AG04450 (cell line): ENCODE measurements at regions of chr3 and their contacts with region 1.

Region 1: DNA sequence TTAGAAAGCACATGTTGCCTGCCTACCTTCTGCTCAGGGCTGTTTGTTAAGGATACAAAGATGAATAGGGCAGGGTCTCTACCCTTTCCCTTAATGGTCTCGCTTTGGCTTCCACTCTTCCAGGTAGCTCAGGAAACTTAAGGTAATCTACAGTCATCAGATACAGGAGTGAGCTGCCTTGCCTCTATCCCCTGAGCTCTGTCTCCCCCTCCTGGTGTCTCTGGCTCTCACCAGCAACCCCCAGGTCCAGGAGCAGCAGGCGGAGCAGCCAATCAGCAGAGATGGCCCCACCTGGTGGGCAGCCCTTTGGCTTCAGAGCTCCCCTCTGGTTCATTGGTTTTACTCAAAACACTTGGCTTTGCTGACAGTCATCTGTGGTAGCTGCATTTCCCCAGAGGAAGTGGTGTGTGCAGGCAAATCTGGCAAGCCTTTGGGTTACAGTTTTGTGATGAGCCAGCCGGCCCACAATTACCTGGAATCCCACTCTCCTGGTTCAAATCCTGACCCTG is 8.5 kb upstream of the CX3CR1 start:
- DNase-seq: peak; percentile 46
- H3K4me3 ChIP-seq: no peak overlapping the region
- H3K27ac ChIP-seq: no peak overlapping the region
- H3K27me3 ChIP-seq: no peaks in the 10 kb centered on the region
- CTCF ChIP-seq: peak; percentile 96

Region 2: GRCh38 chr3:39101022-39101689 is 187.2 kb before region 1 on chr3:
- CTCF ChIA-PET with region 1: interaction called, 16 read pairs
- POLR2A ChIA-PET with region 1: no interaction called
- DNase-seq: no peak
- H3K4me3 ChIP-seq: no peak overlapping the region
- H3K27ac ChIP-seq: no peak overlapping the region
- H3K27me3 ChIP-seq: no peaks in the 10 kb centered on the region
- CTCF ChIP-seq: peak; percentile 71

Region 3: DNA sequence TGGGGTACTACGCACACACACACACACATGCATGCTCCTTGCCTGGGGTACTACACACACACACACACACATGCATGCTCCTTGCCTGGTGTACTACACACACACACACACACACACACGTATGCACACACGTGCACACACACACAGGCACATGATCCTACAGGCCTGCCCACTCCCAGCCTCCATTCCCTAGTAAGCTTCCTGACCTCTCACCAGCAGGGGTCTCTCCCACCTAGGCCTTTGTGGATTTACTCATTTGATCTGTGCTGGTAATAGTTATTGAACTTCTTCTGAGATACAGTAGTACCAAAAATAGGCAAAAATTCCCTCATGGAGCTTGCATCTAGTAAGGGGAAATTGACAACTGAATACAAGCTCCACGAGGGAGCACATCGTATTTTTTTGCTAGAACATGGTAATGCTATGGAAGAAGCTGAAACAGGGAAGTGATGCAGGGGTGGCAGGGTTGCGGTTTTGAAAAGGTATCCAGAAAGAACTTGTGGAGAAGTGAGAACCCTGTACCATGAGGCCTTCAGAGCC is 161.8 kb before region 1 on chr3:
- CTCF ChIA-PET with region 1: interaction called, 446 read pairs
- POLR2A ChIA-PET with region 1: interaction called, 4 read pairs
- DNase-seq: no peak
- H3K4me3 ChIP-seq: no peak overlapping the region
- H3K27ac ChIP-seq: no peak overlapping the region
- H3K27me3 ChIP-seq: no peaks in the 10 kb centered on the region
- CTCF ChIP-seq: peak; percentile 80

Region 4: DNA sequence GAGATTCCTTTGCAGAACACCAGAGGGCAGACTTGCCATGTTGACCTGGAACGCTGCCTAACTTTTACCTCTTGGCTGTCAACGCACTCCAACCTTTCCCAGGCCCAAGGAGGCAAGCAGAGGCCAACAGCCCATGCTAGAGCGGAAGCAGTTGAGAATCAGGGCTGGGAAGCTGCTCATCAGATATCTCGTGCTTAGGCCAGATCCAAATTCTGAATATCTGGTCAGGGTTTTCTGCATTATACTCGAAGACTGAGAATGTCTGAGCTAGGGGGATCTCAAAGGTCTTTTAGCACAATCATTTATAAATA is 98.4 kb before region 1 on chr3:
- CTCF ChIA-PET with region 1: interaction called, 269 read pairs
- POLR2A ChIA-PET with region 1: no interaction called
- DNase-seq: no peak
- H3K4me3 ChIP-seq: no peak overlapping the region
- H3K27ac ChIP-seq: no peak overlapping the region
- H3K27me3 ChIP-seq: no peaks in the 10 kb centered on the region
- CTCF ChIP-seq: peak; percentile 82

Region 5: GRCh38 chr3:39272191-39272590 is 16.2 kb before region 1 on chr3:
- CTCF ChIA-PET with region 1: interaction called, 47 read pairs
- POLR2A ChIA-PET with region 1: no interaction called
- DNase-seq: no peak
- H3K4me3 ChIP-seq: no peak overlapping the region
- H3K27ac ChIP-seq: no peak overlapping the region
- H3K27me3 ChIP-seq: peaks cover 10% of the 10 kb centered on the region
- CTCF ChIP-seq: no peak

Region 6: DNA sequence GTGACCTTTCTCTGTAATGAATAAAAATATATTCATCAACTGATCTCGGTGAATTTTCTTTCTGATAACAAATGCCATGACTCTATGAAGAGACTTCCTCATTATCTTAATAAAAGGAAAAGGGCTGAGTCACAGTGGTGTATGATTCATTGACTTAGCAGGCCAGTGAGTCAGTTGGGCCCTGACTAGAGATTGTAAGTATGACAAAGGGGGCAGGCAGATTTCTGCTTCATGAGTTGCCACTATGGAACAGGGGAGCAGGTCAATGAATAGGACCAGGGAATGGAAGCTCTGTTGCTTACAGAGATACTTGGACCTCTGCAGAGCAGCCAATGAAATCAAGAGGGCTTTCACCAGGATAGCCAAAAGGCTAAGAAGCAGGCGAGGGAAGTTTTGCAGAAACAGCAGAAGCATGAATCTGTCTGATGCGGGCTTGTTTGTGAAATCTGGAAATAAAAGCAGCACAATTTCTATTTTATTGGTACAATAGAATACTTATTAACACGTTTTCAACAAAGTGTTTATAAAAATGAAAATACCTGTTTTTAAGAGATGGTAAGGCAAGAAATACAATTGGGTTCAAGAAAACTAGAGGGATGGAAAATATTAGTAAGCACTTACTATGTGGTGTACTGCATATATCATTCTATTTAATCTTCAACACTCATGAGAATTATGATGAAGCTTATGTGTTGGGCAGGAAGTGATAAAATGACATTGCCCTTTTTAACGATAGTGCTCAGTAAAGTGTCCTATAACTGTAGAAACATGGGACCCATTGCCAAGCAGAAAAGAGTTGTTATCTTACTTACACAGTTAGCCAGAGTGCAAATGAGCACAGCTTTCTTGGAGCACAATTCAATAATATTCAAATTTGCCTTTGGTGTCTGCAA is 351.2 kb after region 1 on chr3:
- CTCF ChIA-PET with region 1: no interaction called
- POLR2A ChIA-PET with region 1: no interaction called
- DNase-seq: peak; percentile 79
- H3K4me3 ChIP-seq: no peak overlapping the region
- H3K27ac ChIP-seq: peak overlapping the region; percentile 59
- H3K27me3 ChIP-seq: no peaks in the 10 kb centered on the region
- CTCF ChIP-seq: no peak